Activated B cell treated with CpG ODN at 0.5 μM for 24 hours (primary cell): ENCODE measurements at regions of chr13 and their contacts with region 1.

Region 1: DNA sequence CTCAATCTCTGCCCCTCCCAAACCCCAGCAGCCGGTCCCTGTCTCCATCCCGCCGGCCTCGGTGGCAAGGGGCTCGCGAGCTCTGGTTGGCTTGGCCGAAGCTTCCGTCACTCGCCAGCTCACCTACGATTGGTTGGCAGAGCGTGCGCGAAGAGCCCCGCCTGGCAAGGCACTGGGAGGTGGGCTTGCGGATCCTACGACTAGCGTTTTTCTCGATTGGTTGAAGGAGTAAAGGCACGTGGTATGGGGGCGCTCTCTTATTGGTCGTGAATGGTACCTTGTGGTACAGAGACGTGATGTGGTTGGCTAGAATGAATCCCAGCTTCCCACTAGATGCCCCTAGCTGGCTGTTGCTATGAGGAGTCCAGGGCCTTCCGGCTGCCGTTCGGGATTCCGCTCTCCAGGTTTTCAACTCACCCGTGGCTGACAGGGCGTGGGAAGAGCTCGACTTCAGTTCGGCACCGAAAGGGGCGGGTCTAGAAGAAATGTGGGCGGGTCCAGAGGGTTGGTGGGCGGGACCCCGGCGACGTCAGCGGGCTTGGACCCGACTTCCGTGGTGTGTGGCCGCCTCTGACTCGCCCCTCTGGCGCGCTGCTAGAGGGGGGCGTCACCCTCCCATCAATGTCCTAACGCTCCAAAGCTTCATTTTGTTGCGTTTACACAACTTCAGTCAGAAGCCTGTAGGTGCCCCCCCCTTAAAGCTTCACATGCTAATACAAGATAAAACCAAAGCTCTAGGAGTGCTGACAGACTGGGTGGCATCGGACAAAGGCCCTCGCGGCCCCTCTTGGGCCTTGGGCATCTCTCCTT is 847 bp upstream of the RAP2A start:
- DNase-seq: peak; percentile 99
- ATAC-seq: peak; percentile 73
- H3K4me3 Mint-ChIP-seq: peak overlapping the region; percentile 94
- H3K27ac Mint-ChIP-seq: peak overlapping the region; percentile 97
- H3K4me1 Mint-ChIP-seq: peaks cover 32% of the 10 kb centered on the region
- H3K27me3 Mint-ChIP-seq: no peaks in the 10 kb centered on the region
- CTCF ChIP-seq: no peak

Region 2: GRCh38 chr13:95676762-95677563 is 1756.2 kb before region 1 on chr13 and contains the start of gene DNAJC3:
- CTCF ChIA-PET with region 1: no interaction called
- POLR2A ChIA-PET with region 1: interaction called, 11 read pairs
- intact Hi-C with region 1: no loop called
- DNase-seq: peak; percentile 97
- ATAC-seq: peak; percentile 94
- H3K4me3 Mint-ChIP-seq: peak within 1 kb of the TSS; percentile 96
- H3K27ac Mint-ChIP-seq: peak within 1 kb of the TSS; percentile 92
- H3K4me1 Mint-ChIP-seq: peaks cover 52% of the 10 kb centered on the region
- H3K27me3 Mint-ChIP-seq: no peaks in the 10 kb centered on the region
- CTCF ChIP-seq: no peak
- total RNA-seq, gene DNAJC3: 14.7 and 17.4 TPM in 2 replicates

Region 3: DNA sequence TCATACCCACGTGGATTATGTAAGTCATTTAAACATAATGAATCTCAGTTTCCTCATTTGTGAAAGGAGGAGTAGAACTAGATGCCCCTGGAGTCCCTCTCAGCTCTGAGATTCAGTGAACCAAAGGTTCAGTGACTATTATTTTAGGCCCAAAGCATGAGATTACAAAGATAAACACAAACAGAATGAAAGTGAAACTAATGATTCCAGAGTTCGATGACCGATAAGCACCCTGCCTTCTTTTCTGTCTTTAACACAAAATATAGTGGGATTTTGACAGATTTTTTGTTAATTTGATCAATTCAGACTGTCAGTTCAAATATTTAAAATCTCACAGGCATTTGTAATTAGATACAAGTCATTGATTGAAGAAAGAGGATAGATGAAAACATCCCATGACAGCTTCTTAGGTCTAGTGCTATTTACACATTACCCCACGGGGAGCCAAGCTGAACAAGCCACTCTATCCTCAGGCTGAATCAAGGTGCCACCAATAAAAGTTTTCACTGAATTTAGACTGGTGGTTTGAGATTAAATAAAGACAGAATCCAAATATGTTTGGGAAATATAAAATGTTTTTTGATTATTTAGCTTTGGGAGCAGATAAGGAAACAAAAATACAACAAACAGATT is 63.7 kb before region 1 on chr13:
- CTCF ChIA-PET with region 1: no interaction called
- POLR2A ChIA-PET with region 1: interaction called, 13 read pairs
- intact Hi-C with region 1: loop called (anchors 2 kb)
- DNase-seq: no peak
- ATAC-seq: no peak
- H3K4me3 Mint-ChIP-seq: peak overlapping the region; percentile 84
- H3K27ac Mint-ChIP-seq: peak overlapping the region; percentile 57
- H3K4me1 Mint-ChIP-seq: peaks cover 16% of the 10 kb centered on the region
- H3K27me3 Mint-ChIP-seq: no peaks in the 10 kb centered on the region
- CTCF ChIP-seq: no peak

Region 4: DNA sequence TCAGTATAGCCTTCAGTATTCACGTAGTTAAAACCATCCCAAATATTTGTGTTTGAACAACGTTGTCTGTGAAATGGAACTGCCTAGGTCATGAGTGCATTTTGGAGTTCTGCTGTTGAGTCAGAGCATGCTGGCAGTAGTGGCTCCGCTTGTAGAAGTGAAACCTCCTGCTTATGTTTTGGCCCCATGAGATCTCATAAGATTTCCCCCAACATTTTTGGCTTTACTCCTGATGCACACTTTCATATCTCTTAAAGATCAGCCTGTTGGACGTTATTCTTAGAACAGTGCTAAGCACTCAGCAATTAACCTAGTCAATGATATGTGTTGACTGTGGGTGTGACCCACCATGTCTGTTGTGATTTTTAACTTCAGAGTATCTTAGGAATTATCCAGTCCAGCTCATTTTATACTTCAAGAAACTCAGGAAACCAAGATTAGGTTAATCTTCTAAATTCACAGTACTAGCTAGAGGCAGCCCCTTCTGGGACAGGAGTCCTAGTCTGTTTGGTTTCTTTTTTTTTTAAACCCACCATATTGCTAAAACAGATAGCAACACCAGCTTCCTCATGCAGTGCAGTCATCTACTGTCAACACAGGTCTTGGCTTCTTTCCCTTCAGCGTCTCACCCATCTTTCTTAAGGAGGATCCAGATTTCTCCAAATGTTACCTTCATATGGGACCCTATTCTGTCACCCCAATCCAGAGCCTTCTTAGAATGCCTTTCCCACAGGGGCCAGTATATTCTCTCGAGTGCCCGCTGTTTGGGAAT is 27.1 kb after region 1 on chr13:
- CTCF ChIA-PET with region 1: no interaction called
- POLR2A ChIA-PET with region 1: interaction called, 84 read pairs
- intact Hi-C with region 1: loop called (anchors 1 kb)
- DNase-seq: no peak
- ATAC-seq: peak; percentile 95
- H3K4me3 Mint-ChIP-seq: peak overlapping the region; percentile 57
- H3K27ac Mint-ChIP-seq: peak overlapping the region; percentile 89
- H3K4me1 Mint-ChIP-seq: peaks cover 39% of the 10 kb centered on the region
- H3K27me3 Mint-ChIP-seq: no peaks in the 10 kb centered on the region
- CTCF ChIP-seq: no peak

Region 5: DNA sequence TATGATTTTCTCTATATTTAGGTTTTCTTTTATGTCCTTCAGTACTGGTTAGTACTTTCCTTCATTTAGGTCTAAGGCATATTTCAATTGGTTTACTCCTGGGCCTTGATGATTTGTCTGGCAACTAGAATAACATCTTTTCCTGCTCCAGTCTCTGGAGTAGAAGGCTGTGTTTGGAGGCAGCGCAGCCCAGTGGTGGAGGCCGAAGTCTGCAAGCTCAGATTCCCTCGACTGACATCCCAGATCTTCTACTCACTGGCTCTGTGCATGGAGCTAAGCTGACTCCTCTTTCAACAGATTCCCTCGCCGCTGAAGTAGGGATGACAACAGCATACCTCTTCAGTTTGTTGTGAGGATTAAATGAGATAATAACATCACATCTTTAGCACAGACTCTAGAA is 141.8 kb after region 1 on chr13:
- CTCF ChIA-PET with region 1: interaction called, 3 read pairs
- POLR2A ChIA-PET with region 1: interaction called, 3 read pairs
- intact Hi-C with region 1: loop called (anchors 5 kb)
- DNase-seq: no peak
- ATAC-seq: no peak
- H3K4me3 Mint-ChIP-seq: no peak overlapping the region
- H3K27ac Mint-ChIP-seq: no peak overlapping the region
- H3K4me1 Mint-ChIP-seq: no peaks in the 10 kb centered on the region
- H3K27me3 Mint-ChIP-seq: no peaks in the 10 kb centered on the region
- CTCF ChIP-seq: no peak

Region 6: DNA sequence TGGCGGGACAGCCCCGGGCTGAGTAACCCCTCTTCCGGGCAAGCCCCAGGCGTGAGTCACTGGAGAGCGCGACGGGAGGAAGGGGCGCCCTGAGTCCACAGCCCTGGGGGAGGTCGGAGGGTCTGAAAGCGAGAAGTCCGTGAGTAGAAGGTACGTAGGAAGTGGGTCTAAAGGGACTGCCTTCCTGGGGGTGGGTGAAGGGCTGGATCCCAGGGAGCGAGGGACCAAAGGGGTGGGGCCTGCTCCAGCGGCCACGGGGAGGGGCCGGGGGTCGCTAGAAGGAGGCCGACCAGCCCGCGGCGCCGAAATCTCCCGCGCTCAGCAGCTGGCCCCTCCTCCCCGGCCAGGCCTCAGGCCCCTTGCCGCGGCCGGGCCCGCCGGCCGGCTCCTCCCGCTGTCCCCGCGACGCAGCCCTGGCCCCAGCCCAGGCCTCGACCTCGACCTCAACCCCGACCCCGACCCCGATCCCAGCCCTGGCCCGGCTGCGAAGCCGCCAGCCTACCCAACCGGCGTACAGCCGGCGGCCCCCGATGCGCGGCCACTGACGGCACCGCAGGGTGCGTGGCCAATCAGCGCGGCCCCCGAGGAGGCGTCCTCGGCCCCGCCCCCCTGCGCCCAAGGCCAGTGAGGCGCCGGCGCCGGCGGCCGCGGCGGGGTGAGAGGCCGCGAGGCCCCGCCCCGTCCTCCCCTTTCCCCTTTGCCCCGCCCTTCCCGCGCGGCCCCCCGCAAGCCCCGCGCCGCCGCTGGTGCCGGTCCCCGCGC is 542.9 kb after region 1 on chr13:
- CTCF ChIA-PET with region 1: no interaction called
- POLR2A ChIA-PET with region 1: no interaction called
- intact Hi-C with region 1: loop called (anchors 1 kb)
- DNase-seq: peak; percentile 95
- ATAC-seq: peak; percentile 91
- H3K4me3 Mint-ChIP-seq: peak overlapping the region; percentile 92
- H3K27ac Mint-ChIP-seq: peak overlapping the region; percentile 94
- H3K4me1 Mint-ChIP-seq: peaks cover 39% of the 10 kb centered on the region
- H3K27me3 Mint-ChIP-seq: no peaks in the 10 kb centered on the region
- CTCF ChIP-seq: no peak

Region 7: DNA sequence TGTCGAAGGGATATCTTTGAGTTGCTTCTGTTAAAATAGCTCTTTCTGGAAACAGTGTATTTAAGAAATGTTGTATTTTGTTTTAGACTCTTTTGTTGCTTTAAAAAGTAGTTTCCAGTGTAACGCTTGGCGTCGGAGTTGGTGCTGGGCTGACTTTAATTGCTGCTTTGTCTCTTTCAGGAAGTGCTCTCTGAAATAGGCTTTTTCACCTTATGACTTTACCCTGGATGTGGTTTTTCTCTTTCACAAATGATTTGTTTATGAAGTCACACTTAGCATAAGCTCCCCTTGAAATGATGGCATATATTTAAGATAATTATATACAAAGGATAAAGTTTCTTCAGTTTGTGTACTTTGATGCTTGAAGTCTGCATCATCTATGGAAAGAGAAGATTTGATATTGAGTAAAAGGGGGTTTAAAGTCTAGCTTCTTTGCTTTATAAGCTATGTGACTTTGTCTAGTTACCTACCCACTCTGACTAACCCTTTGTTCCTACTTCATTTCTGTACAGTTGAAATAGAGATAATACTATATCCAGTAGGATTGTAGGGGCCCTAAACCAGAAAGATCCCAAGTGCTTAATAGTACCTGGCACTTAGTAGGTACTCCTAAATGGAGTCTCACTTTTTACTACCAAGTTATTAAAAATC is 1825.2 kb after region 1 on chr13 and contains the start of gene GPR18:
- CTCF ChIA-PET with region 1: no interaction called
- POLR2A ChIA-PET with region 1: no interaction called
- intact Hi-C with region 1: loop called (anchors 2 kb)
- DNase-seq: no peak
- ATAC-seq: peak; percentile 65
- H3K4me3 Mint-ChIP-seq: peak within 1 kb of the TSS; percentile 94
- H3K27ac Mint-ChIP-seq: peak within 1 kb of the TSS; percentile 96
- H3K4me1 Mint-ChIP-seq: peaks cover 86% of the 10 kb centered on the region
- H3K27me3 Mint-ChIP-seq: no peaks in the 10 kb centered on the region
- CTCF ChIP-seq: no peak
- total RNA-seq, gene GPR18: 29.0 and 32.4 TPM in 2 replicates